Caki2 (cell line): ENCODE measurements at regions of chr2 and their contacts with region 1.

Region 1: GRCh38 chr2:186339716-186340115 is 146.3 kb upstream of the ZC3H15 start:
- DNase-seq: no peak

Region 2: DNA sequence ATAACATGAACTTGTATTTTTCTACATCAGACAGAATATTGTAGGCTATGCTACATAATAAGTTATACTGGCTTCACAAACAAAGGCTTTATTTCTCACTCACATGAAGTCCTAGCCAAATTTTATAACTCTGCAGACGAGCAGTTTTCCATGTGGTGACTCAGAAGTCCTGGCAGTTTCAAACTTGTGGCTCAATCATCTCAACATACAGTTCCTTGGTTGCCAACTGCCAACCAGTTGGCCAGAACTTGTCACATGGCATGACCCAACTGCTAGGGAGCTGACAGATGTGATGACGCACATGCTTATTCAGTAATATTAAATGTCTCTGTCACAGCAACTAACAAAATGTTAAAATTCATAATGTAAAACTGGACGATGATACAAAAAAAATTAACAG is 82.5 kb after region 1 on chr2:
- in situ Hi-C with region 1: loop called (anchors 10 kb)
- DNase-seq: no peak